Aorta (tissue), 5 donors: ENCODE measurements at regions of chr9 and their contacts with region 1.

Region 1: DNA sequence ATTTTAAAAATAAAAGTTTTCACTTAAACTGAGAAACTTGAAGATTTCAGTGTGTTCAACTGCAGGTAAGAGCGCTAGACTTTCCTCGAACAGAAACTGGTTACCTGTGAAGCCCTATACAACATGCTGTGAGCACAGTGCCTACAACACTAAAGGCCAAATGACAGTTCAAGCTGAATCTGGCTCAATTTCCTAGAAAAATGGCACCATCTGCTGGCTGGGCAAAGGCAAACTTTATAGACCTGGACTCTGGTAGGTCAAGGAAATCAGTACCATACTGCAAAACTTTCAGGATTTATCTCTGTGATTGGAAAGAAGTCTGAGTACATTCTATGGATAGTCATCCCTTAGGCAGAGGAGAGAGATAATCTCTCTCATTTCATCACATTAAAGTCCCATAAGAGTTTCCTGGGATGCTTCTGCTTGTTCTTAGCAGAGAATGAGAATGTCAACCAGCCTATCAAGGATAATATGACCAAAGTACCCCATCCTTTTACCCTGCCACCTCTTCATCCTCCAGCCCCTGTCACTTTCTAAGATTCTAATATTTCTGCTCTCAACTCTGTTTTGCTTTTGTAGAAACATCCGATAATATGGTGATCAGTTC is 31.8 kb upstream of the FOXB2 start:
- DNase-seq: no peak
- ATAC-seq: no peak
- H3K4me3 ChIP-seq: no peak overlapping the region
- H3K27ac ChIP-seq: no peak overlapping the region
- H3K4me1 ChIP-seq: no peaks in the 10 kb centered on the region
- H3K27me3 ChIP-seq: no peaks in the 10 kb centered on the region

Region 2: GRCh38 chr9:76761448-76761847 is 226.2 kb before region 1 on chr9:
- intact Hi-C with region 1: loop called in 1 of 2 experiments (anchors 5 kb)
- DNase-seq: no peak
- ATAC-seq: no peak
- H3K4me3 ChIP-seq: no peak overlapping the region
- H3K27ac ChIP-seq: no peak overlapping the region
- H3K4me1 ChIP-seq: peaks cover 0 to 4% of the 10 kb centered on the region in 2 donors
- H3K27me3 ChIP-seq: no peaks in the 10 kb centered on the region

Region 3: GRCh38 chr9:76810377-76810957 is 177.2 kb before region 1 on chr9:
- intact Hi-C with region 1: loop called (anchors 1 kb)
- DNase-seq: no peak
- ATAC-seq: peak; percentile 63
- H3K4me3 ChIP-seq: no peak overlapping the region
- H3K27ac ChIP-seq: no peak overlapping the region
- H3K4me1 ChIP-seq: peaks cover 0 to 3% of the 10 kb centered on the region in 2 donors
- H3K27me3 ChIP-seq: no peaks in the 10 kb centered on the region

Region 4: DNA sequence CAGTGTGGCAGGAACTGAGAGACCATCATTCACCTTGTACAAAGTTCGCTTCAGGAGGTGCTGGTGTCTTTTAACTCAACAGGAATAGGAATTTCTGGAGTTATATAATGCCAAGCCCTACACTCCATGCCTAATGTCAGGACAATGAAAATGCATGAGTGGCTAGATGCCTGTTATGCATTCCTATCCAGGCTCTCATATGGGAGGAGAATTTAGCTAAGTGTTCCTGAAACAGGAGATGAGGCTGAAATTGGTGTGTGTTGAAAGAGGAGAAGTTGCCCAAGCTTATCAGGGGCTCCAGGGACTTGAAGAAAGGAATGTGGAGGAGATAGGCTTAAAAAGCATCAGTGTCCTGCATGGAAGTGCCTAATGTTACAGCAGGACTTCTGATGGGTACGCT is 54.9 kb before region 1 on chr9:
- intact Hi-C with region 1: loop called in 1 of 2 experiments (anchors 10 kb)
- DNase-seq: no peak
- ATAC-seq: no peak
- H3K4me3 ChIP-seq: no peak overlapping the region
- H3K27ac ChIP-seq: no peak overlapping the region
- H3K4me1 ChIP-seq: no peaks in the 10 kb centered on the region
- H3K27me3 ChIP-seq: no peaks in the 10 kb centered on the region

Region 5: DNA sequence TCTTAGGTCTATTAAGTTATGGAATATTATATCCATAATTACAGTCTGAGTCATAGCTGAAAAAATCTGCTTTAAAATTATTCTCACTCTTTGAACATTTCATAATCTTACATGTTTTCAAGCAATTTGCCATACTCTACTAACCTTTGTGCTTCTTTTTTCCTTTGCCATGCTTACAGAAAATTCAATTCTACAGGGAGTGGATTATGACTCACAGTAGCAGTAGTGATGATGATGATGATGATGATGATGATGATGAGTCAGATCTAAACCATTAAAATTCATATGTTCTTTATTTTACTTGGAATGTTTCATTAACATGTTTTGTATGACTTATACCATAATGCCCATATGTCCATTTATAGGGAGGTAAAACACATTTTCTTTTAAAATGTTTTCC is 396.7 kb after region 1 on chr9:
- intact Hi-C with region 1: no loop called
- DNase-seq: no peak
- ATAC-seq: no peak
- H3K4me3 ChIP-seq: no peak overlapping the region
- H3K27ac ChIP-seq: no peak overlapping the region
- H3K4me1 ChIP-seq: peaks cover 0 to 2% of the 10 kb centered on the region in 2 donors
- H3K27me3 ChIP-seq: no peaks in the 10 kb centered on the region